ENCODE measurements at regions of chr4 and their contacts with region 1.

Region 1: GRCh38 chr4:1674682-1675081 is 9.4 kb downstream of the FAM53A start:
- DNase-seq: no peak
- H3K4me3 ChIP-seq: no peak overlapping the region
- CTCF ChIP-seq: no peak
- POLR2A ChIP-seq: no peak

Region 2: GRCh38 chr4:1351854-1352633 is 322.6 kb before region 1 on chr4:
- intact Hi-C with region 1: no loop called
- DNase-seq: peak; percentile 70 to 98
- H3K4me3 ChIP-seq: no peak overlapping the region
- CTCF ChIP-seq: peak in 1 of 3 donors; percentile 76
- POLR2A ChIP-seq: no peak

Region 3: GRCh38 chr4:1960170-1960825 is 285.6 kb after region 1 on chr4:
- intact Hi-C with region 1: loop called (anchors 5 kb)
- DNase-seq: no peak
- H3K4me3 ChIP-seq: no peak overlapping the region
- CTCF ChIP-seq: no peak
- POLR2A ChIP-seq: no peak

Region 4: GRCh38 chr4:2630556-2631273 is 956.0 kb after region 1 on chr4:
- intact Hi-C with region 1: no loop called
- DNase-seq: peak in 1 of 2 donors; percentile 63
- H3K4me3 ChIP-seq: no peak overlapping the region
- CTCF ChIP-seq: no peak
- POLR2A ChIP-seq: no peak